PC-3 (cell line): ENCODE measurements at regions of chr3 and their contacts with region 1.

Region 1: GRCh38 chr3:115245437-115245836 is 98.3 kb upstream of the ZBTB20 start:
- DNase-seq: peak; percentile 93
- ATAC-seq: peak; percentile 97
- H3K4me3 ChIP-seq: no peak overlapping the region; the same call in 1 of the 2 replicates
- H3K27ac ChIP-seq: peak overlapping the region; percentile 95
- H3K4me1 ChIP-seq: peaks cover 38% of the 10 kb centered on the region
- H3K27me3 ChIP-seq: no peaks in the 10 kb centered on the region
- CTCF ChIP-seq: no peak

Region 2: GRCh38 chr3:114565216-114565615 is 680.2 kb before region 1 on chr3:
- CTCF ChIA-PET with region 1: no interaction called
- POLR2A ChIA-PET with region 1: interaction called, 18 read pairs
- intact Hi-C with region 1: no loop called
- DNase-seq: no peak
- ATAC-seq: no peak
- H3K4me3 ChIP-seq: no peak overlapping the region
- H3K27ac ChIP-seq: no peak overlapping the region
- H3K4me1 ChIP-seq: no peaks in the 10 kb centered on the region
- H3K27me3 ChIP-seq: no peaks in the 10 kb centered on the region
- CTCF ChIP-seq: no peak

Region 3: DNA sequence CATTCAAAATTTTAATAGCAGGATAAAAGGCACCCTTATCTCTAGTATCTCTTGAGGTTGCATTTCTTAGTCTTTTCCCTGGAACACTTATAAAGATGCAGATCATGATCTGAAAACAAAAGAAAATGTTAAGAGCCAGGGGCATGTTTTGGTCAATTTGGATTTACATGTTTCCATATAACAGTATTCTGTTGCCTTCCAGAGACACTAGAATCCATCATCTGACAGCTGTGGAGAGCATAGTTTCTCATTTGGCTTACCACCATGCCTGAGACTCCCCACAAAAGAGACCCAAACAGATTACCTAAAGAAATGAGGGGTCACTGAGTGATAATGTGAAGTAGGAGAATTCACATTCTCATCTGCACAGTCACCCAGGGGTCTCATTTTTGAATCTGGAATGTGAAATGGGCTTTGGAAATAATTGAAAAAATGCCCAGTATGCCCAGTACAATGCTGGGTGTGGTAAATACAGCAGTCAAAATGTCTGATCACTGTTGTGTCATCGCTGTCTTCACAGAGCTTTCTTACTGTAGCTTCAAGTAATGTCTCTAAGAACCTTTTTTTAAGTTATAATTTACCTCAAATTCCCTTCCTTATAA is 18.5 kb before region 1 on chr3:
- CTCF ChIA-PET with region 1: no interaction called
- POLR2A ChIA-PET with region 1: no interaction called
- intact Hi-C with region 1: no loop called
- DNase-seq: peak; percentile 11
- ATAC-seq: peak; percentile 27; the same call in 1 of the 2 replicates
- H3K4me3 ChIP-seq: no peak overlapping the region
- H3K27ac ChIP-seq: peak overlapping the region; percentile 54
- H3K4me1 ChIP-seq: peaks cover 9% of the 10 kb centered on the region
- H3K27me3 ChIP-seq: no peaks in the 10 kb centered on the region
- CTCF ChIP-seq: no peak